Activated naive CD8-positive, alpha-beta T cell treated with anti-CD3 and anti-CD28 coated beads, Interleukin-2, amount 10 ng/mL, durations not matched to agents 7 days and 5 days (primary cell): ENCODE measurements at regions of chr3 and their contacts with region 1.

Region 1: GRCh38 chr3:98593046-98593936 is at the start of gene CPOX:
- DNase-seq: peak; percentile 89
- ATAC-seq: peak; percentile 97
- H3K4me3 Mint-ChIP-seq: peak within 1 kb of the TSS; percentile 98
- H3K27ac Mint-ChIP-seq: peak within 1 kb of the TSS; percentile 97
- H3K4me1 Mint-ChIP-seq: peaks cover 47% of the 10 kb centered on the region
- H3K27me3 Mint-ChIP-seq: no peaks in the 10 kb centered on the region
- total RNA-seq, gene CPOX: 51.1 to 52.2 TPM

Region 2: GRCh38 chr3:98563661-98564281 is 29.5 kb before region 1 on chr3:
- POLR2A ChIA-PET with region 1: interaction called, 23 read pairs
- DNase-seq: no peak
- ATAC-seq: peak; percentile 6
- H3K4me3 Mint-ChIP-seq: peak overlapping the region; percentile 89
- H3K27ac Mint-ChIP-seq: peak overlapping the region; percentile 99
- H3K4me1 Mint-ChIP-seq: peaks cover 70% of the 10 kb centered on the region
- H3K27me3 Mint-ChIP-seq: no peaks in the 10 kb centered on the region

Region 3: DNA sequence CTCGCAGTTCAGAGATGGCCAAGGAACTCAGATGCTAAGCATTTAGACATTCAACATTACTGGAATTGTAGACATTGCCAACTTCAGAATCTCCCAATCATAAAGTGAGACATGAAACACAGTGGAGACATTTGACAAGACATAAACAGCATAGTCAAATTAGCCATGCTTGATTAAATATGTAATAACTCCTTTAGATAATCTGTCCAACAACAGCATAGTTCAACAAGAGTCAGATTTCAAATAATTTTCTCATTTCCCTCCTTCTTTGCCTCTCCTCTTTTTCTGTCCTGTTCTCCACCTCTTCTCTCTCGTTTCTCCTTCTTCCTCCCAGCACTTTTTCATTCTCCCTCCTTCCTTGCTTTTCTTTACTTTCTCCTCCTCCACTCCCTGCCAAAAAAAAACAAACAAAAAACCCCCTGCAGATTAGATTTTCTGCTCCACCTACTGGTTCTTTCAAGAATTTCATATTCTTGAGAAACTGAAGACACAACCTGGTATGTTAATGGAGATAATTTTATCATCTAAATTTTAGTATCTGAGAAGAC is 20.0 kb before region 1 on chr3:
- POLR2A ChIA-PET with region 1: interaction called, 12 read pairs
- DNase-seq: no peak
- ATAC-seq: peak; percentile 37
- H3K4me3 Mint-ChIP-seq: peak overlapping the region; percentile 52
- H3K27ac Mint-ChIP-seq: peak overlapping the region; percentile 81
- H3K4me1 Mint-ChIP-seq: peaks cover 42% of the 10 kb centered on the region
- H3K27me3 Mint-ChIP-seq: no peaks in the 10 kb centered on the region

Region 4: GRCh38 chr3:98612587-98612986 is 19.3 kb after region 1 on chr3:
- POLR2A ChIA-PET with region 1: no interaction called
- DNase-seq: no peak
- ATAC-seq: no peak
- H3K4me3 Mint-ChIP-seq: no peak overlapping the region
- H3K27ac Mint-ChIP-seq: no peak overlapping the region
- H3K4me1 Mint-ChIP-seq: no peaks in the 10 kb centered on the region
- H3K27me3 Mint-ChIP-seq: peaks cover 5% of the 10 kb centered on the region

Region 5: GRCh38 chr3:98855806-98856400 is 262.6 kb after region 1 on chr3:
- POLR2A ChIA-PET with region 1: no interaction called
- DNase-seq: no peak
- ATAC-seq: no peak
- H3K4me3 Mint-ChIP-seq: no peak overlapping the region
- H3K27ac Mint-ChIP-seq: no peak overlapping the region
- H3K4me1 Mint-ChIP-seq: no peaks in the 10 kb centered on the region
- H3K27me3 Mint-ChIP-seq: no peaks in the 10 kb centered on the region